ENCODE measurements at regions of chr19 and their contacts with region 1.

Region 1: GRCh38 chr19:33905937-33906576 is 109.4 kb downstream of the KCTD15 start:
- DNase-seq: peak; percentile 86

Region 2: DNA sequence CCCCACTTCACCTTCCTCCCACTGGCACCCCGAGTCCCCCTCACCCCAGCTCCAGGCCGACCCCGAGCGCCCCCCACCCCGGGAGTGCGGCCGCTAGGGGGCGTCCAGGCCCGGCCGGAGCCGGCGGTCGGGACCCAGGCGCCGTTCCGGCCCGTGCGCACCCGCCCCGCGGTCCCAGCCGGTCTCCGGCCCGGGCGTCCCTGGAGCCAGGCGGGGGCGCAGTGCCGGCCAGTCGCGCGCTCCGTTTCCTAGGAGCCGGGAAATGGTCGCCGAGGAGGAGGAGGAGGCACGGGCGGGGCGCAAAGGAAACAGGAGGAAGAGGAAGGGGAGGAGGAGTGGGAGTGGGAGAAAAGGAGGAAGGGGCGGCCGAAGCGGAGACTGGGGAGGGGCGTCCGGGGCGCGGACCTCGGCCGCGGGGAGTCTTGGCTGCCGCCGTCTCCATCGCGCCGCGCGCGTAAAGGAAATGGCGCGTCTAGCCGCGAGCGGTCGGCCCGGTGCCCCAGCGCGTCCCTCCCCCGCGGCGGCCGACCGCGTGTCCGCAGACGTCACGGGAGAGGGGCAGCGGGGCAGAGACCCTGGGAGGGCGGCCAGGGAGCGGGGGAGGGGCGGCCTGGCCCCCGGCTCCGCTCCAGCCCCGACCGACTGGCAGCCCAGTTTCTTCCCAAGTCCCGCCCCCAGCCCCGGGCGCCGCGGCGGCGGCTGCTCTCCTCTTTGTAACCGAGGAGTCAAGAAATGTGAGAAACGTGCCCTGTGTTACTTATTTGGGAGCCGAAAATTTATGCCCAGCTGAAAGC is 110.5 kb before region 1 on chr19:
- intact Hi-C with region 1: loop called (anchors 1 kb)
- DNase-seq: peak; percentile 92

Region 3: GRCh38 chr19:33819880-33820781 is 85.9 kb before region 1 on chr19:
- intact Hi-C with region 1: loop called (anchors 1 kb)
- DNase-seq: peak; percentile 92

Region 4: GRCh38 chr19:33998739-33999345 is 92.8 kb after region 1 on chr19:
- intact Hi-C with region 1: loop called (anchors 2 kb)
- DNase-seq: no peak

Region 5: DNA sequence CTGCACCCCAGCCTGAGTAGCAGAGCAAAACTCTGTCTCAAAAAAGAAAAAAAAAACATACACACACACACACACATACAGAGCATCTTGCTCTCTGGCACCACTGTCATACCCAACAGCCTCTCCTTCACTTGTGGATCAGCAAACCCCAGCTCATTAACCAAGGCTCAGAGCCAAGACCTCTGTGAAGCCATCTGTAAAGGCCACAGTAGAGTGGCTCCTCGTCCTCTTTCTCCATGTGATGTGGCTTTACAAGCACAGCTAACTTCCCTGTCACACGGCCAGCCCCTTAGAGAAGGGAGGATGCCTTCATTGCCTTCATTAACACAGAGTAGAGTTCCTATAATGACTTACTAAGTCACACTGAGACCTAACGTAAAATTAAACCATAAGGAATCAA is 203.5 kb after region 1 on chr19:
- intact Hi-C with region 1: no loop called
- DNase-seq: no peak

Measured in cardiac septum (tissue), 1 donor.